ENCODE measurements at regions of chr1 and their contacts with region 1.

Region 1: DNA sequence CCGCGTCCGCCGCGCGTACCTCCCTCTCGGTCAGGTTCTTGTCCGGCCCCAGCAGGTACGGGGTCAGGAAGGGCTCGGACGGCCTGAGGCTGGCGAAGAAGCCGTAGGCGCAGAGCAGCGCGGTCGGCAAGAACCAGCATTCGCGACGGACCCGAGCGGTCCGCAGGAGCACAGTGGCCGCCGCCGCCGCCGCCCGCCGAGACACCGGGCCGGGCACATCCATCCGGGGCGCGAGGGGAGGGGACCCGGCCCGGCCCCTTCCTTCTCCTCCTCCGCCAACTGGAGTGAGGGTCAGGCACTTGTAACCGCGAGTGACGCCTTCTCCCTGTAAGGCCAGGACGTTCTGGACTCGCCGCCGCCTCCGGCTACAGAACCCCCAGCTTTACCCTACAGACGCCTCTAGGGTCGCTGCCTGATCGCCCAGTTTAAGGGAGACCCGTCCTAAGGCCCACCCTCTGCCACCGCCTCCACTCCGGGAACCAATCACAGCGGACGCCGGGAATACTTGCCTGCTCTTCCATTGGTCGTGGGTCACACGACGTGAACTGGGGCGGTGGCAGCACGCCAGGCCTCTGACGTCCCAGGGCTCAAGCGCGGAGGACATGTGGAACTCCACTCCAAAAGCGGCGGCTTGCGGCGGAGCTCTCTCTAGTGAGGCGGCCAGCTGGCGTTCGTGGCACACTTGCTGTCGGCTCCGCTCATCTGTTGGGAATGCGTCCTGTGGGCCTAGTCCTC is at the start of gene SLC19A2:
- DNase-seq: peak; percentile 99 to 100
- ATAC-seq: peak; percentile 96 to 99 (median 98)
- H3K4me3 ChIP-seq: peak within 1 kb of the TSS; percentile 72 to 92 (median 86)
- H3K27ac ChIP-seq: peak within 1 kb of the TSS; percentile 92 to 99 (median 96)
- H3K4me1 ChIP-seq: peaks cover 0 to 45% (median 21%) of the 10 kb centered on the region in 9 donors
- H3K27me3 ChIP-seq: no peaks in the 10 kb centered on the region
- CTCF ChIP-seq: peak in 8 of 9 donors; percentile 20 to 61 (median 36)
- total RNA-seq, gene SLC19A2: 7.6 to 36.3 (median 16.1) TPM

Region 2: DNA sequence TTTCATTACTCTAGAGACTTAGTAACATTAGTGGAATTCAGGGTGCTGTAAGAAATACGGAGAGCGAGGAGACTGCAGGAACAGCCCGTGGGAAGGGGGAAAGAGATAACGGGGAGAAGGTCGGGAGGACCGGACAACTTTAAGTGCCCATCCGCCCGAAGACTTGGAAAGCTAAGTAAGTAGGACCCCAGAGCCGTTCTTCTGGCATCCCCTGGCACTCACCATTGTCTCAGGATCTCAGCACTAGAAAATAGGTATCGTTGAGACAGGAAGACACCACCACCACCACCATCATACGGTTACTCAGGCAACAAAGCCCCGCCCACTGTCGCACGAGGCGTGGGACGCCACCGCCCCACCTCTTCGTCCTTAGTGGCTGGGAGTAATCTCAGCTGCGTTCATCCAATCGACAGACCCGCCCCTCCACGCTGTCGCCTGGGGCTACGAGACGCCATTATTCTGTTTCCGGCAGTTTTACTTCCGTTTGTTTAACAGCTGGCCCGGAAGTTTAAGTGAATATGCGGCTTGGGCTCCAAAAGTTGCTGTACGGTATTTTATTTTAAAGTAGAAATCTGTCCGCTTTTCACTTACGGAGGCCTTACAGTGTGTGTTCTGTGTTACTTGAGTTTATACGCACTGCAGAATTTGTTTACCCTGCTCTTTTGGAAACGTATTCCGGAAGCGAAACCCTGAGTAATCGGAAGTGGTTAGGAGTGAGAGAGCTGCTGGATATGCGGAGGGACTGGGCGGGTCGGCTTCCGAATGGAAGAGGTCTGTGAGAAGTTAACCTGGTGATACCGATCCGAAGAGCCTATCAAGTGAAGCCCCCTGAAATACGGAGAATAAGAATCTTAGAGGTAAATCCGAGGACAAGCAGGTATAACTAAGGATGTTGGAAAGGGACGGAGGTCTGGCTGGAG is 118.0 kb before region 1 on chr1 and contains the starts of genes BLZF1 and NME7:
- intact Hi-C with region 1: loop called in 1 of 10 experiments (anchors 5 kb)
- DNase-seq: peak; percentile 94 to 96
- ATAC-seq: peak; percentile 100
- H3K4me3 ChIP-seq: peak within 1 kb of the TSS; percentile 46 to 84 (median 72)
- H3K27ac ChIP-seq: peak within 1 kb of the TSS in 9 of 10 donors; percentile 19 to 95 (median 85)
- H3K4me1 ChIP-seq: peaks cover 0 to 34% (median 18%) of the 10 kb centered on the region in 9 donors
- H3K27me3 ChIP-seq: no peaks in the 10 kb centered on the region
- CTCF ChIP-seq: no peak
- total RNA-seq, gene BLZF1: 17.3 to 32.5 (median 25.4) TPM
- total RNA-seq, gene NME7: 5.6 to 18.9 (median 10.5) TPM

Region 3: DNA sequence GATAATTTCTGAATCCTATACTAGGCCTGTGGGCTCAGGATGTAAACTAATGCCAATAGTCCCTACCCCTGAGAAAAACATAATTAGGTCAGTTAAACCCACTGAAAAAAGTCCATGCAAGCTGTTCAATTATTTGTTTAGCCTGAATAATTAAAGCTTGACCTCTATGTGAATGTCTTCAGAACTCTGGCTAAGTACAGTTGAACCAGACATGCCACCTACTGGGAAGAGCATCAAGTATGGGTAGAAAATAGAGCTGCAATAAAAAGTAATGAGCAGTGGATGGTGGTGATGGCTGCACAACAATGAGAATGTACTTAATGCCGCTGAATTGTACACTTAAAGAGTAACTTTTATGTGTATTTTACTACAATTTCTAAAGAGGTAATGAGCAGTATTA is 23.6 kb after region 1 on chr1:
- intact Hi-C with region 1: loop called in 1 of 10 experiments (anchors 1 kb)
- DNase-seq: no peak
- ATAC-seq: peak in 3 of 8 donors; percentile 56 to 72 (median 66)
- H3K4me3 ChIP-seq: no peak overlapping the region
- H3K27ac ChIP-seq: no peak overlapping the region
- H3K4me1 ChIP-seq: peaks cover 0 to 37% (median 5%) of the 10 kb centered on the region in 9 donors
- H3K27me3 ChIP-seq: no peaks in the 10 kb centered on the region
- CTCF ChIP-seq: peak in 5 of 9 donors; percentile 17 to 42 (median 33)

Measured in heart right ventricle (tissue), 16 donors.